CD4-positive, alpha-beta T cell (primary cell): ENCODE measurements at regions of chr17 and their contacts with region 1.

Region 1: DNA sequence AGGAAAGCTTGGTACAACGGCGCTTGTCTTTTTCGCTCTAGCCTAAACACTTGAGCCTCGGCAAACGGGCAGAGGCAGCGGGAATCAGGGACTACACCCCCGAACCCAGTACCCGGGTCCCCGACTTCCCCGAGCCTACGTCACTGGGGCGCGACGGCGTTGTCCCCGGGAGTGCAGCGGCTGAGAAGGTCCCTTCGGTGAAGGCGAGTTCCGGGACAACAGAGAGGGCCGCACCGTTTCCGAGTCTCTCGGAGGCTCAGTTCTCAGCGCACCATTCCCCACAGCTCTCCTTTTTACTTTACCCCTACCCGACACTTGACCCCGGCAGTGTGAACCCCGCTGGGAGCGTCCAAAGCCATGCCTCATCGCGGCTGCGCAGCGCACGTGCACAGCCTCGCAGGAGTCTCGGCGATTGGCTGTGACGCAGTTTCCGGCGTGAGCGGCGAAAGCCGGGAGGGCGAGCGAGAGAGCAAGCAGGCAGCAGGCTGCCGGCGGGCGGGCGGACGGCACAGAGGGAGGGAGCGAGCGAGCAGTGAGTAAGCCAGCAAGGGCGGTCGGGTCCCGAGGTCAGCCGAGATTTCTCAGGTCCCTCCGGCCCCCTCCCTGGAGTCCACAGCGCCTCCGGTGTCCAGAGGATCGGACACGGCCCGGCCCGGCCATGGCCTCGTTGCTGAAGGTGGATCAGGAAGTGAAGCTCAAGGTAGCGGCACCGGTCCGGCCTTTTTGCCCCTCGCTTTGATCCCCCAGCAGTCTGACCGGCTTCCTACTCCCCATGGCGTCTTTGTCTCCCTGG is at the start of gene PSME3:
- DNase-seq: peak; percentile 76 to 95 (median 86)
- ATAC-seq: peak; percentile 87
- H3K4me3 ChIP-seq: peak within 1 kb of the TSS; percentile 93
- H3K4me3 Mint-ChIP-seq: peak within 1 kb of the TSS; percentile 95
- H3K27ac ChIP-seq: peak within 1 kb of the TSS; percentile 86 to 88
- H3K27ac Mint-ChIP-seq: peak within 1 kb of the TSS; percentile 98
- H3K4me1 ChIP-seq: peaks cover 24% of the 10 kb centered on the region
- H3K4me1 Mint-ChIP-seq: peaks cover 27% of the 10 kb centered on the region
- H3K27me3 ChIP-seq: no peaks in the 10 kb centered on the region
- H3K27me3 Mint-ChIP-seq: no peaks in the 10 kb centered on the region
- CTCF ChIP-seq: no peak
- total RNA-seq, gene PSME3: 62.1 to 62.5 TPM

Region 2: GRCh38 chr17:42609182-42609813 is 223.9 kb before region 1 on chr17 and contains the starts of genes RETREG3 and TUBG1:
- CTCF ChIA-PET with region 1: no interaction called
- POLR2A ChIA-PET with region 1: no interaction called
- intact Hi-C with region 1: loop called in 1 of 2 experiments (anchors 2 kb)
- DNase-seq: peak; percentile 97 to 100 (median 99)
- ATAC-seq: peak; percentile 90
- H3K4me3 ChIP-seq: peak within 1 kb of the TSS; percentile 100
- H3K4me3 Mint-ChIP-seq: peak within 1 kb of the TSS; percentile 100
- H3K27ac ChIP-seq: peak within 1 kb of the TSS; percentile 92 to 96
- H3K27ac Mint-ChIP-seq: peak within 1 kb of the TSS; percentile 97
- H3K4me1 ChIP-seq: peaks cover 40% of the 10 kb centered on the region
- H3K4me1 Mint-ChIP-seq: peaks cover 51% of the 10 kb centered on the region
- H3K27me3 ChIP-seq: no peaks in the 10 kb centered on the region
- H3K27me3 Mint-ChIP-seq: no peaks in the 10 kb centered on the region
- CTCF ChIP-seq: no peak
- total RNA-seq, gene RETREG3: 46.7 to 48.7 TPM
- total RNA-seq, gene TUBG1: 7.3 to 8.5 TPM

Region 3: DNA sequence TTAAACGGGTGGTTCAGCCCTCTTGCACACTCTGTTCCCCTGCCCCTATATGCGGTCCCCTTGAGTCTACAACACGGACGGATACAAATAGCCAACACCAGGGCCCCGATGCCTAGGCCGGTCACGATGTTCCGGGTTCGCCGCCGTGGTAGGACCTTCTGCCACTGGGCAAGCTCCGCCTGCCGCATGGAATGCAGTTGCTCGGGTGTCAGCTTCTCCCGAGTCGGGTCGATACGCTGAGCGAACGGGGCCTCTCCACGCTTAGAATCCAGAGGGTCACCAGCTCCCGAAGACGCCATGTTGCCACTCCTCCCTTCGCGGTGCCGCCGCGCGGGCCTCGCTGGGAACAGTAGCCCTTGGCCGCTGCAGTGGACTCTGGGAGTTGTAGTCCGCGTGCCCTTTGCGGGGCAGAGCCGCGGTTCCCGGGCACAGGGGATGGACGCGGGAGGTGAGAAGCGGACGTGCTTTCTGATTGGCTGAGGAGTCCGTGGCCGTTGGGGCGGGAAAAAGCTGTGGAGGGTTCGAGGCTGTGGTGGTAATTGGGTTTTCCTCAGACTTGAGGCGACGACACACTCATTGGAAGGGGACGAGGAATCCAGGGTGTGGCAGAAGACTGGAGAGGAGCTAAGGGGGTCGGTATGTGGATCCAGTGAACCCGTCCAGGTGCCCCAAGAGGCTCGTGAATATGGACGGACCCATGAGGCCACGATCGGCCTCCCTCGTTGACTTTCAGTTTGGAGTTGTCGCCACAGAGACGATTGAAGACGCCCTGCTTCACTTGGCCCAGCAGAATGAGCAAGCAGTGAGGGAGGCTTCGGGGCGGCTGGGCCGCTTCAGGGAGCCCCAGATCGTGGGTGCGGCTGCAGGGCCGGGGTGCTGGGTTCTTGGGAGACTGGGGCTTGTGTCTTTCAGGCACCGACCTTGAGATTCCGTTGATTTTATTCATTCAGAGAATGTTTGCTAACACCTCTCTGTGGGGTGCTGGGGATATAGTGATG is 34.5 kb before region 1 on chr17 and contains the starts of genes CNTD1 and COA3:
- CTCF ChIA-PET with region 1: no interaction called
- POLR2A ChIA-PET with region 1: interaction called, 3 read pairs
- intact Hi-C with region 1: loop called in 1 of 2 experiments (anchors 5 kb)
- DNase-seq: peak; percentile 59 to 86 (median 68)
- ATAC-seq: peak; percentile 99
- H3K4me3 ChIP-seq: peak within 1 kb of the TSS; percentile 92
- H3K4me3 Mint-ChIP-seq: peak within 1 kb of the TSS; percentile 92
- H3K27ac ChIP-seq: peak within 1 kb of the TSS in 1 of 2 donors; percentile 3
- H3K27ac Mint-ChIP-seq: peak within 1 kb of the TSS; percentile 63
- H3K4me1 ChIP-seq: peaks cover 30% of the 10 kb centered on the region
- H3K4me1 Mint-ChIP-seq: peaks cover 19% of the 10 kb centered on the region
- H3K27me3 ChIP-seq: no peaks in the 10 kb centered on the region
- H3K27me3 Mint-ChIP-seq: no peaks in the 10 kb centered on the region
- CTCF ChIP-seq: no peak
- total RNA-seq, gene CNTD1: not detected
- total RNA-seq, gene COA3: 4.0 to 4.5 TPM

Region 4: DNA sequence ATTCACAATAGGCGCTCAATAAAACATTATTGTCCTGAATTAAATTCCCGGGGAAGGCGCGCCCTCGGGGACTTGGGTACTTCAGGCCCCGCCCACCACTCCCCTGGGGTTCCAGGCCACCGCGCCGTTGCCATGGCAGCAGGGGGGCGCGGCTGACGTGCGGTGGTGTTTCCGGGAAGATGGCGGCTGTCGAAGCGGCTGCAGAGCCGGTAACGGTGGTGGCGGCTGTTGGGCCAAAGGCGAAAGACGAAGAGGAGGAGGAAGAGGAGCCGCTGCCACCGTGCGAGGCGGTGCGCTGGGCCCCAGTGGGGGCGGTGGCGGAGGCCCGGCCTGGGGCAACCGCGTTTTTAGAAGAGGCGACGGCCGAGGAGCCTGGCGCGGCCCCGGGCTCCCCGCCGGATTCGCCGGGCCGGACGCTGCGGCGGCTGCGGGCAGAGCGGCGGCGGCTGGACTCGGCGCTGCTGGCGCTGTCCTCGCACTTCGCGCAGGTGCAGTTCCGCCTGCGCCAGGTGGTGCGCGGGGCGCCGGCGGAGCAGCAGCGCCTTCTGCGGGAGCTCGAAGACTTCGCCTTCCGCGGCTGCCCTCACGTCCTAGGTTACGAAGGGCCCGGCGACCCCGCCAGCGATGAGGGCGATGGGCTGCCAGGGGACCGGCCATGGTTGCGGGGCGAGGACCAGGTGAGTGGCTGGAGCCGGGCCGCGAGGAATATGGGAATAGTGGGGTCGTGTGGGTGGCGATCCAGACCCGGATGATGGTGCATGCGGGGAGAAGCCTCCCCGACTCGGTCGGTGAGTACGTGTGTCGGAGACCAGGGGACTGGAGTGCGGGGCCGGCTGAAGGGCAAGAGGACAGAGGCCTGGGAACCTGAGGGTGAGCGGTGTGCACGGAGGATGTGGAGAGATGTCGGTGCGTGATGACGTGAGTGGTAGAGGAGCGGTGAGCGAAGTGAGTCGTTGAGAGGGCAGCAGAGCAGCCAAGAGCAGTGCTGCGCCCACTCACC is 147.5 kb after region 1 on chr17 and contains the start of gene RUNDC1:
- CTCF ChIA-PET with region 1: no interaction called
- POLR2A ChIA-PET with region 1: no interaction called
- intact Hi-C with region 1: loop called in 1 of 2 experiments (anchors 5 kb)
- DNase-seq: peak; percentile 79 to 96 (median 88)
- ATAC-seq: peak; percentile 86
- H3K4me3 ChIP-seq: peak within 1 kb of the TSS; percentile 87
- H3K4me3 Mint-ChIP-seq: peak within 1 kb of the TSS; percentile 95
- H3K27ac ChIP-seq: peak within 1 kb of the TSS; percentile 58 to 66
- H3K27ac Mint-ChIP-seq: peak within 1 kb of the TSS; percentile 84
- H3K4me1 ChIP-seq: peaks cover 32% of the 10 kb centered on the region
- H3K4me1 Mint-ChIP-seq: peaks cover 44% of the 10 kb centered on the region
- H3K27me3 ChIP-seq: no peaks in the 10 kb centered on the region
- H3K27me3 Mint-ChIP-seq: no peaks in the 10 kb centered on the region
- CTCF ChIP-seq: no peak
- total RNA-seq, gene RUNDC1: 11.6 to 11.7 TPM

Region 5: DNA sequence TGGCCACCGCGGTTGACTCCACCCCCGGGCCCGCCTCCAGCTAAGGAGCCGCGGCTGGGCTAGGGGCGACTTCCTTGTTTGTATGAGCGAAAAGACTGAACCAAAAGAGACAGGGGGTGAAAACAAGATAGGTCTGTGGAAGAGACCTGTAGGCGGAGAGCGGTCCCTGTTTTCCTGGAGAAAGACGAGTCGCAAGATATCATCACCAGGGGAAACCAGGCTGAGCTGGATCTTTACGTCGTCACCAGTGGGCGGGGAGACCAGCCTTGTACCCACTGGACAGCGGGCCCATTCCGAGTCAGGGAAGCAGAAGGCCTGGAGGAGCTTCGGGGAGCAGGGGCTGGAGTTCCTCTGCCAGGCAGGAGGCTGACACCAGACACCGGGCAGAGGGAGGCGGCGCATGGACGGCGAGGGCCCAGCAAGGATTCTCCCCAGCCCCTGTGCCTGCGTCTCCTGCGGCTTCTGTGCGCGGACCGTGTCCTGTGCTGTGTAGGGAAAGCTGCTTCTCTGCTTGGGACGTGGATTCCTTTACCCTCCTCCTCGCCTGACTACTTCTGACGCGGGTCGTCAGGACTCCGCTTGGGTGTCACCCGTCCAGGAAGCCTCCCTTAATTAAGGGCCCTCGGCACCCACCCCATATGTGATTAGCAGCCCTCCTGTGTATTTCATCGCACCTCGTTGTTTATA is 555.3 kb after region 1 on chr17:
- CTCF ChIA-PET with region 1: no interaction called
- POLR2A ChIA-PET with region 1: no interaction called
- intact Hi-C with region 1: loop called in 1 of 2 experiments (anchors 5 kb)
- DNase-seq: peak; percentile 84 to 95 (median 90)
- ATAC-seq: peak; percentile 70
- H3K4me3 ChIP-seq: peak overlapping the region; percentile 71
- H3K4me3 Mint-ChIP-seq: peak overlapping the region; percentile 93
- H3K27ac ChIP-seq: peak overlapping the region; percentile 94 to 97
- H3K27ac Mint-ChIP-seq: peak overlapping the region; percentile 97
- H3K4me1 ChIP-seq: peaks cover 27% of the 10 kb centered on the region
- H3K4me1 Mint-ChIP-seq: peaks cover 36% of the 10 kb centered on the region
- H3K27me3 ChIP-seq: no peaks in the 10 kb centered on the region
- H3K27me3 Mint-ChIP-seq: no peaks in the 10 kb centered on the region
- CTCF ChIP-seq: no peak